PC-3 (cell line): ENCODE measurements at regions of chr12 and their contacts with region 1.

Region 1: DNA sequence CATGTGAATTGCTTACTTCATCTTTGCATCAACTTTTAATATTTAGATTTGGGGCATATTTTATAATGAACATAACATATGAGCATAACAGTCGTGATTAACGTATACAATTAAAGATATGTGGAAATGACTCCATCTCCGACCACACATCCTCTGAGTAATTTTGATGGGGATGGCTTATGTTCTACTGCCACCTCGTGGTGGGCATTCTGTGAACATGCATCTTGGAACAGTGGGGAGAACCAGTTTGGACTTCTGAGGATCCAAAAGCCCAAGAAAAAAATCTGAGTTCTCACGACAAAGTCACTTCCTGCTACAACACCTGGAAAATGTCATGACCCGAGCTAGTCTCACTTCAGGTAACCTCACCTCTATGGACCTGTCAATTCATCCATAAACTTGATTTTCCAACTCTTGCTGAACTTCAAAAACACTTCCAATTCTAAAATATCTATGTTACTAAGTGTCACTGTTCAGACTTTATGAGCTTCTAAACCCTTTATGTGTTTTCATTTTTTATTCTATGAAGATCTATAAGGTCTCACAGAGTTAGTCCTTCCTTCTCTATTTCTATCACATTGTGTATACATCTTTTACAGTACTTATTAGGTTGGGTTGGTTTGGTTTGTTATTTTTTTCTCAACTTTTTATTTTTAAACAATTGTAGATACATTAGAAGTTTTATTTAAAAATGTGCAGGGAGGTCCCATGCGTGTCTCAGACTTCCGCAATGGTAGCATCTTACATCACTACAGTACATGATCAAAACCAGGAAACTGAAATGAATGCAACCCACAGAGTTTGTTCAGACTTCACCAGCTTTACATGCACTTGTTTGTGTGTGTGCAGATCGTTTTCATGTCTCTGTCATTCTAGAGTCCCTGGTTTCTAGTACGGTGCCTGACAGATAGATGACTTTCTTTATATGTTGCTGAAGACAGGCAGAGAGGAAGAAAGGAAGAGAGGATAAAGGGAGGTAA is 38.2 kb upstream of the STAB2 start:
- DNase-seq: peak; percentile 95
- ATAC-seq: peak; percentile 56
- H3K4me3 ChIP-seq: no peak overlapping the region
- H3K27ac ChIP-seq: no peak overlapping the region
- H3K4me1 ChIP-seq: peaks cover 24% of the 10 kb centered on the region
- H3K27me3 ChIP-seq: no peaks in the 10 kb centered on the region
- CTCF ChIP-seq: peak; percentile 98

Region 2: GRCh38 chr12:101939856-101940265 is 1609.1 kb before region 1 on chr12:
- CTCF ChIA-PET with region 1: interaction called, 3 read pairs
- POLR2A ChIA-PET with region 1: no interaction called
- intact Hi-C with region 1: loop called (anchors 2 kb)
- DNase-seq: peak; percentile 77
- ATAC-seq: peak; percentile 78
- H3K4me3 ChIP-seq: no peak overlapping the region
- H3K27ac ChIP-seq: no peak overlapping the region
- H3K4me1 ChIP-seq: no peaks in the 10 kb centered on the region
- H3K27me3 ChIP-seq: peaks cover 22% of the 10 kb centered on the region
- CTCF ChIP-seq: peak; percentile 93

Region 3: GRCh38 chr12:102879144-102879763 is 669.7 kb before region 1 on chr12:
- CTCF ChIA-PET with region 1: interaction called, 5 read pairs
- POLR2A ChIA-PET with region 1: no interaction called
- intact Hi-C with region 1: loop called (anchors 1 kb)
- DNase-seq: peak; percentile 75
- ATAC-seq: peak; percentile 73
- H3K4me3 ChIP-seq: no peak overlapping the region
- H3K27ac ChIP-seq: no peak overlapping the region
- H3K4me1 ChIP-seq: no peaks in the 10 kb centered on the region
- H3K27me3 ChIP-seq: peaks cover 14% of the 10 kb centered on the region; the same call in 1 of the 2 replicates
- CTCF ChIP-seq: peak; percentile 74

Region 4: DNA sequence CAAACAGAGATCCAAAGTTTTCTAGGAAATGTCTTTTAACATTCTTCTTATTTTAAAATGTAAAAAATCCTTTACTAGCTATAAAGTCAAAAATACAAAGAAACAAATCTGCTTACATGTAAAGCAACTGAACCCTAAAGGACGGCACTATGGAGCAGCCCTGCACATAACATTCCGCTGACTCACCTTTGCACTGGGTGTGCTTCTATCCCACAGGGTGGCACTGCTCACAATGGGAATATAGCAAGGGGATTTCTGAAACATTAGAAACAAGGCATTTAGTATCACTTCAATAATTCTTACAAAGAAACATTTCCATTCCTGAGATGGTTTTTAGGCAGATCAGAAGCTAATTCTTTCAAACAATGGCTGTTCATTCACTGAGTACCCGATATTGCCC is 147.5 kb before region 1 on chr12:
- CTCF ChIA-PET with region 1: no interaction called
- POLR2A ChIA-PET with region 1: no interaction called
- intact Hi-C with region 1: loop called (anchors 1 kb)
- DNase-seq: peak; percentile 84
- ATAC-seq: peak; percentile 93
- H3K4me3 ChIP-seq: no peak overlapping the region
- H3K27ac ChIP-seq: no peak overlapping the region
- H3K4me1 ChIP-seq: peaks cover 17% of the 10 kb centered on the region
- H3K27me3 ChIP-seq: peaks cover 25% of the 10 kb centered on the region
- CTCF ChIP-seq: peak; percentile 77